Cardiac septum (tissue), 1 donor: ENCODE measurements at regions of chr3 and their contacts with region 1.

Region 1: GRCh38 chr3:197791113-197791891 is at the start of gene LRCH3:
- DNase-seq: peak; percentile 93
- total RNA-seq, gene LRCH3: 27.6 TPM

Region 2: GRCh38 chr3:197820550-197821335 is 29.4 kb after region 1 on chr3:
- intact Hi-C with region 1: loop called (anchors 1 kb)
- DNase-seq: no peak